ENCODE measurements at regions of chr21 and their contacts with region 1.

Region 1: DNA sequence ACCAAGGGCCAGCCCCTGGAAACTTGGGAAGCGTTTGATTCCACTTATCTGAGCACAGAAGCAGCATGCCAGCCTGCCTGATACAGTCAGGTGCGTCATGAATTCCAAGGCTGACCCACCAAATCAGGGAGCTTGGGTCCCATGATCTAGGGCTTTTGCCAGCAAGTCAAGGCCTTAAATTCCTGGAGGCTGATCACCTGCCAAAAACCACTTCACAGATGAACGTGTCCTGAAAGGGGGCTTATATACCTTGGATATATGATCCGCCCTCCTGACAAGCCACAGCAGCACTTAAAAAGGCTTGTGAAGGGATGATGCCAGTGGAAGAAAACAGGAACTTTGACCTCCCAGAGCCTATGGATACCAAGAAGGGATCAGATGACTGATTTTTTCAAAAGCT is 24.0 kb upstream of the CLIC6 start:
- DNase-seq: no peak
- H3K4me3 ChIP-seq: no peak overlapping the region
- H3K27ac ChIP-seq: no peak overlapping the region
- H3K4me1 ChIP-seq: peaks cover 27% of the 10 kb centered on the region
- H3K27me3 ChIP-seq: no peaks in the 10 kb centered on the region
- CTCF ChIP-seq: no peak

Region 2: GRCh38 chr21:34669149-34669879 is 24.5 kb after region 1 on chr21:
- CTCF ChIA-PET with region 1: interaction called, 17 read pairs
- dilution Hi-C with region 1: no loop called
- in situ Hi-C with region 1: no loop called
- intact Hi-C with region 1: no loop called
- DNase-seq: no peak
- H3K4me3 ChIP-seq: no peak overlapping the region
- H3K27ac ChIP-seq: no peak overlapping the region
- H3K4me1 ChIP-seq: peaks cover 7% of the 10 kb centered on the region
- H3K27me3 ChIP-seq: peaks cover 34% of the 10 kb centered on the region
- CTCF ChIP-seq: no peak

Region 3: GRCh38 chr21:36624105-36624504 is 1979.3 kb after region 1 on chr21:
- CTCF ChIA-PET with region 1: no interaction called
- dilution Hi-C with region 1: no loop called
- in situ Hi-C with region 1: no loop called
- intact Hi-C with region 1: no loop called
- DNase-seq: no peak
- H3K4me3 ChIP-seq: no peak overlapping the region
- H3K27ac ChIP-seq: no peak overlapping the region
- H3K4me1 ChIP-seq: peaks cover 3% of the 10 kb centered on the region
- H3K27me3 ChIP-seq: no peaks in the 10 kb centered on the region
- CTCF ChIP-seq: no peak

Measured in mammary epithelial cell (primary cell).